ENCODE measurements at regions of chr9 and their contacts with region 1.

Region 1: GRCh38 chr9:97982683-97983588 is at the start of gene ANP32B:
- DNase-seq: peak; percentile 67 to 96
- H3K4me3 ChIP-seq: peak within 1 kb of the TSS; percentile 92
- H3K27ac ChIP-seq: peak within 1 kb of the TSS; percentile 93
- H3K4me1 ChIP-seq: peaks cover 37% of the 10 kb centered on the region
- H3K27me3 ChIP-seq: no peaks in the 10 kb centered on the region
- CTCF ChIP-seq: peak; percentile 56; the same call in 1 of the 2 replicates
- total RNA-seq, gene ANP32B: 280 and 284 TPM in 2 replicates

Region 2: DNA sequence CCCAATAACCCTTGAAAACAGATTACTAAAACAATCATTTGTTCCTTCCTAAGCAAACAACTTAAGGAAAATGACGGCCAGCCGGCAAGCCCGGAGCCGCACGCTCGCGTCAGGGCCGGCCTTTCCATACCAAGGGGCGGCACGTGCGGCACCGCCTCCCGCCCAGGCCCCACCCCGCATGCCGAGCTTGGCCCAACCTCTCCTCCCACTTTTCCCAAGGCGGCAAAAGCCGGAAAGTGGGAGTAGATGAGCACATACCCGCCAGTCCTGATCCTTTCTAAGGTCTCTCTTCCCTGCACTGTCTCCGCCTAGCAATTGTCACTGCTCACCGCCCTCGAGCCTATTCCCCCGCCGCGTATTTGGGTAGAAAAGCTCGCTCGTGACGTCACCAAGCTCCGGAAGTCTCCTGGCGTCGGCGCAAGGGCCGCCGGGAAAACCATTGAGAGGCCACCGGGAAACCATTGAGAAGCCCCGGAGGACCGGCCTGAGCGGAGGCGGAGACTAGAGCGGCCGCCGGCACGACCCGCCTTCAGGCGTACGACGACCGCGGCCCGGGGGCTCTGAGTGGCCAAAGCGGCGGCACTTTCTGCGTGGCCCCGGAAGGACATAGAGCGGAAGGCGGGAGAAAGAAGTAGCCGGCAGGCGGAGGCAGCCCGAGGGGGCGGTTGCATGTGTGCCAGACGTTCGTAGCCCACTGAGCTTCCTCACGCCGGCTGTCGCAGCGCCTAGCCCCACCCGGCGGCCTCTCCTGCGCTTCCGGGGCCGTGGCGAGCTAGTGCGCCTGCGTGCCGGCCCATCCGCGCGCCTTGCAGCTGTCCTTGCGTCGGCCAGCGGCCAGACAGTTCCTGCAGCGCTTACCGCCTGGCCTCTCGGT is 349.7 kb before region 1 on chr9 and contains the starts of genes NCBP1 and TSTD2:
- CTCF ChIA-PET with region 1: no interaction called
- POLR2A ChIA-PET with region 1: no interaction called
- intact Hi-C with region 1: loop called (anchors 1 kb)
- DNase-seq: peak; percentile 94 to 98
- H3K4me3 ChIP-seq: peak within 1 kb of the TSS; percentile 95
- H3K27ac ChIP-seq: peak within 1 kb of the TSS; percentile 99
- H3K4me1 ChIP-seq: peaks cover 38% of the 10 kb centered on the region
- H3K27me3 ChIP-seq: no peaks in the 10 kb centered on the region
- CTCF ChIP-seq: no peak
- total RNA-seq, gene NCBP1: 38.6 and 40.2 TPM in 2 replicates
- total RNA-seq, gene TSTD2: 17.0 and 19.3 TPM in 2 replicates

Region 3: GRCh38 chr9:97928986-97929604 is 53.8 kb before region 1 on chr9:
- CTCF ChIA-PET with region 1: no interaction called
- POLR2A ChIA-PET with region 1: no interaction called
- intact Hi-C with region 1: no loop called
- DNase-seq: no peak
- H3K4me3 ChIP-seq: no peak overlapping the region
- H3K27ac ChIP-seq: no peak overlapping the region
- H3K4me1 ChIP-seq: 0 out of 2 replicates have a peak, but pooled peaks cover 1% of the 10 kb centered on the region
- H3K27me3 ChIP-seq: no peaks in the 10 kb centered on the region
- CTCF ChIP-seq: no peak

Region 4: GRCh38 chr9:98192503-98193335 is 209.8 kb after region 1 on chr9 and contains the start of gene CORO2A:
- CTCF ChIA-PET with region 1: no interaction called
- POLR2A ChIA-PET with region 1: no interaction called
- intact Hi-C with region 1: loop called (anchors 1 kb)
- DNase-seq: peak; percentile 74 to 93
- H3K4me3 ChIP-seq: peak within 1 kb of the TSS; percentile 63
- H3K27ac ChIP-seq: peak within 1 kb of the TSS; percentile 46
- H3K4me1 ChIP-seq: peaks cover 16% of the 10 kb centered on the region
- H3K27me3 ChIP-seq: no peaks in the 10 kb centered on the region
- CTCF ChIP-seq: peak; percentile 62; the same call in 1 of the 2 replicates
- total RNA-seq, gene CORO2A: 19.5 and 19.8 TPM in 2 replicates

Region 5: DNA sequence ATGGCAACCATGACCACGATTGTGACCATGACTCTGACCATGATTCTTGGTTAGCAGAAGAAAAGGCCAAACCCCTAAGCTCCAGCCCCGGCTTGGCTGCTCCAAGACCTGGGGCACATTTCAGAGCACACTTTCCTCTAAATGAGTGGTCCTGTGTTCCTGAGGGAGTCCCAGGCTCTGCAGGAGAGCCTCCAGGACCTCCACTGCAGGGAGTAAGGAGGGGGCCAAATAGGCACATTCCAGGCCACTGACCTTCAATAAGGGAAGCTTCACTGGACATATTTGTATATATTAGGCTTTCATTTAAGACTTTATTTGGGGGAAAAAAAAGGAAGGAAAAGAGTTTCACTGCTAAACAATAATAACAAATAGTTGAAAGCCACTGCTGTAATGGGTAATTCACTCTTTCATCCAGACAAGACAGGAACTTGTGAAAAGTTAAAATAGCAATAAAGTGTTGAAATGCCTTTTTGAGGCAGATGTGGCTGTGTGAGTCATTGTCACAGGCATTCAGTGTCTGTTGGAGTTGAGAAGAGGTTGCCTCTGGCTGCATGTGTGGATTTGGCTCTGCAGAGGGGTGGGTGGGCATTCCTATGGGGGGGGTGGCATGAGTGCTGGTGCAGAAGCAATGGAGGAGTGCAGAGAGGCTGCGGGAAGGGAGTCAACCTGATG is 1058.1 kb after region 1 on chr9:
- CTCF ChIA-PET with region 1: no interaction called
- POLR2A ChIA-PET with region 1: no interaction called
- intact Hi-C with region 1: no loop called
- DNase-seq: peak in 1 of 2 experiments; percentile 59
- H3K4me3 ChIP-seq: no peak overlapping the region
- H3K27ac ChIP-seq: no peak overlapping the region
- H3K4me1 ChIP-seq: peaks cover 18% of the 10 kb centered on the region
- H3K27me3 ChIP-seq: no peaks in the 10 kb centered on the region
- CTCF ChIP-seq: no peak

Measured in PC-9 (cell line).